ENCODE measurements at regions of chr2 and their contacts with region 1.

Region 1: DNA sequence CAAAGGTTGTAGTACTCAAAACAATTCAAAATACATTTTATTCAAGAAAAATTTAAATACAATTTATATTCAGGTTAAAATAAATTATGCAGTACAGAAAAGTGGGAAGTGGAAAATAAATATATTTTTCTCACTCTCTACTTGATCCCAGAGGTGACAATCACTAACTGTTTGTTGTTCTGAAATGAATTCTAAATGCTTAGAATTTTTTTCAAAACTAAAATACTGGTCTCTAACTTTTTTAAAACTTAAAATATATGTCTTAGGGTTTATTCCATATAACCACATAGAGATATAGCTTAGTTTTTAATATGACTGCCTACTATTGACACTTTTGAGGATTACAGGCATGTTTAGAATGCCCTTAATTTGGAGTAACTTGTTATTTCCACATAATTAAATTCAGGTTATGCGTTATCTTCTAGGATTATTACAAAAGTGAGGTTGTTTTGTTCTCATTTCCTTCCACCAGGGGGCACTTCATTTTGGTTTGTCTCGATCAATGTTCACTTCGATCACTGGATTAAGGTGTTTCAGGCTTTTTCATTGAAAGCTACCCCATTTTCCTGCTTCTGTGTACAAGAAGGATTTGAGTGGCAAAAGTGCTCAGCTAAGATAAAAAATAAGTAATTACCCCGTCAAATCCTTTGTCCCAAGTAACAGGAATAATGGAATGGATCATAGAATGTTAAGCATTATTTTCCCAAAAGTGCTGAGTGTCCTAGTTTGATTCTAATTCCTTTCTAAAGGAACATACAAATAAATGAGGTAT is 27.1 kb upstream of the TFPI start:
- DNase-seq: peak; percentile 76
- ATAC-seq: peak; percentile 68
- H3K4me3 ChIP-seq: peak overlapping the region in 1 of 2 experiments; percentile 16; a peak in 3 of 4 replicates
- H3K27ac ChIP-seq: no peak overlapping the region
- H3K4me1 ChIP-seq: peaks cover 0 to 11% of the 10 kb centered on the region in 2 experiments; a peak in 2 of 4 replicates
- H3K27me3 ChIP-seq: no peaks in the 10 kb centered on the region
- CTCF ChIP-seq: peak; percentile 54 to 81 (median 76); a peak in 5 of 6 replicates
- POLR2A ChIP-seq: no peak
- RAD21 ChIP-seq: peak; percentile 68

Region 2: DNA sequence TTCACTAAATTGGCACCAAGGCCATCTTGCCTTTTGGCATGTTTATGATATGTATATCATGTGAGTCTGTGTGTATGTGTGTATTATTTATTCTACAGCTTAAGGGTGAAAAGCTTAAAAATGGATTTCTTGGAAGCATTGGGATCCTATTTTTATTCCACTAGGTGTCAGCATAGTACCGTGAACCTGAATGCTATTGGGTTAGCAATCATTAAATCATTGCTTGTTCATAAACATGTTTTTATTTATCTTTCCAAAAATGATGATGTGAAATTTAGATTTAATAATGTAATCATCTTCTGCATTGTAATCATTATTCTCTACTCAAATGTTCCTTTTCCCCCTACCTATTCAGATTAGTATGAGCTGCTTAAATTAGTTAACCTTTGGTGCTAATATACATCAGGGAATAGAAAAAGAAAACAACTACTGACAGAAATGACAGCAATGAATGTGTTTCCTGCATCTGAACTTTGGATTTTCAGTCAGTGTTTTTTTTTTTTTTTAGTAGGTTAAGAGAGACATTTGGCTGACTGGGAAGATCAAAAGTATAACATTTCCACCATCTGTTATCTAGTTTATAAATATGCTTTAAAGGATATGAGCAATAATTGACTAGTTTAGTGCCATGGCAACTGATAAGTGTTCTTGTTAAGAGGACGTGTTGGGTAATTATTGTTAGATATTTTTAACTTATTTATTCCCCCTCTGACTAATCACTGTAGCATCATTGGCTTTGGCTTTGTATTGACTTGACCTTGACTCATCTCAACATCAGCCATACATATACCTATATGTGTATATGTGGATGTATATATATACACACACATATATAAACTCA is 718.2 kb before region 1 on chr2:
- CTCF ChIA-PET with region 1: interaction called, 8 read pairs
- POLR2A ChIA-PET with region 1: no interaction called
- RAD21 ChIA-PET with region 1: interaction called in 1 of 2 experiments, 3 read pairs
- intact Hi-C with region 1: loop called (anchors 2 kb)
- DNase-seq: peak; percentile 32
- ATAC-seq: peak; percentile 78
- H3K4me3 ChIP-seq: no peak overlapping the region
- H3K27ac ChIP-seq: no peak overlapping the region
- H3K4me1 ChIP-seq: no peaks in the 10 kb centered on the region
- H3K27me3 ChIP-seq: no peaks in the 10 kb centered on the region
- CTCF ChIP-seq: peak; percentile 54 to 83 (median 61)
- POLR2A ChIP-seq: no peak
- RAD21 ChIP-seq: peak; percentile 87

Region 3: DNA sequence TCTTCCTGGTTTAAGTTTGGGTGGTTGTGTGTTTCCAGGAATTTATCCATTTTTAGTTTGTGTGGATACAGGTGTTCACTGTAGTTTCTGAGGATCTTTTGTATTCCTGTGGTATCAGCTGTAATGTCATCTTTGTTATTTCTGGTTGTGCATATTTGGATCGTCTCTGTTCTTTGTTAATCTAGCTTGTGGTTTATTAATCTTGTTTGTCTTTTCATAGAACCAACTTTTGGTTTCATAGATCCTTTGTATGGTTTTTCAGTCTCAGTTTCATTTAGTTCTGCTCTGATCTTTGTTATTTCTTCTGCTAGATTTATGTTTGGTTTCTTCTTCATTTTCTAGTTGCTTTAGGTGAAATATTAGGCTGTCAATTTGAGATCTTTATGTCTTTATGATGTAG is 530.0 kb before region 1 on chr2:
- CTCF ChIA-PET with region 1: no interaction called
- POLR2A ChIA-PET with region 1: no interaction called
- RAD21 ChIA-PET with region 1: no interaction called
- intact Hi-C with region 1: no loop called
- DNase-seq: no peak
- ATAC-seq: no peak
- H3K4me3 ChIP-seq: no peak overlapping the region
- H3K27ac ChIP-seq: no peak overlapping the region
- H3K4me1 ChIP-seq: no peaks in the 10 kb centered on the region
- H3K27me3 ChIP-seq: no peaks in the 10 kb centered on the region
- CTCF ChIP-seq: no peak
- POLR2A ChIP-seq: no peak
- RAD21 ChIP-seq: no peak

Region 4: DNA sequence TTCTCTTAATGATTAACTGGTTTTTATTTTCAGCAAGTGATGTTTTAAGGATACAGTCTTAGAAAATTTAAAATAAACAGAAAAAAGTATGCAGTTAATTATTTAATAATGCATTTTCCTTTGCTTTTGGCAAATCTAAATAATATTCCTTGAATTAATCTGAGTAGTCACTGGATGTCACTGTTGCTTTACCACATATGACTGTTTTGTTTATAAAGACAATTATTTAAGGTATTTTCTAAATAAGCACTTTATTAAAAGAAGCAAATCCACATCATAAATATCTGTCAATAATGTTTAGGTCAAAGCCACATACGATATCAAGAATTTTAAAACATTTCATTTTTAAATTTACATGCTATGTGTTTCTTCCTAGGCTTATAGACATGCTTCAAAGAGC is 13.5 kb after region 1 on chr2:
- CTCF ChIA-PET with region 1: interaction called, 25 read pairs
- POLR2A ChIA-PET with region 1: no interaction called
- RAD21 ChIA-PET with region 1: no interaction called
- intact Hi-C with region 1: no loop called
- DNase-seq: no peak
- ATAC-seq: no peak
- H3K4me3 ChIP-seq: no peak overlapping the region
- H3K27ac ChIP-seq: no peak overlapping the region
- H3K4me1 ChIP-seq: no peaks in the 10 kb centered on the region
- H3K27me3 ChIP-seq: no peaks in the 10 kb centered on the region
- CTCF ChIP-seq: peak in 1 of 3 experiments; percentile 20; a peak in 2 of 6 replicates
- POLR2A ChIP-seq: no peak
- RAD21 ChIP-seq: peak; percentile 58

Region 5: DNA sequence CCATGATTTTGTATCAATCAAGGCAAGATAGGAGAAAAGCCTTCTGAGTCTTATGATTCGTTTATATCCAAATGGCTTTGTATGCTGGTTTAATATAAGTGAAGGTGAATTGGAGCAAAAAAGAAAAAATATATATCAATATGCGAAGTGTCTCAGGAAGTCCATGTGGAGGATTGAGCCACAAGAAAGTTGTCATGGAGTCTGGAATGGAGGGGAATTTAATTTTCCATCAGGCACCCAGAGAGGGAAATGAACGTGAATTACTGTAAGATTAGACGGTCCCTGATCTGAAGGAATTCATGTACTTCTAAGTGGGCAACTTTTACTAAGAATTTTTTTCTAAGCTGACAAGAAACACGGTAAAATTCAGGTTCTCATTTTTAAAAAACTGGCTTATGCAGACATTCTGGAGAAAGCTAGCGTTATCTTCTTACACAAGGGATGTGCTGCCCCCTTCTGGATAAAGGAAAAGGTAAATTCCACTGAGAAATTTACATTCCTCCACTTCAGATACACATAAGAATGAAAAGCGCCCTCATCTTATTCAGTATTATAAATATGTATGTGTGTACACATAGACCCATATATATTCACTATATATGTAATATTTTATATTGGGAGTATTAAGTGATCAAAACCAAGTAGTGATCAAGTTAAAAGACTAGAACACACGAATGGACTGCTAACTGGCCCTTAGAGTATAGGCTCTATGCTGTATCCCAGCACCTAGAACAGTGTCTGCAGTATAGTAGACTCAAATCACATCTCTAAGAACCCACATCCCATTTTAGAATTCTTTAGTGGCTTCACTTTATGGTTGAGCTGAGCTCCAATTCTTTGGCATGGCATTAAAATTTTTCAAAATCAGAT is 261.9 kb after region 1 on chr2:
- CTCF ChIA-PET with region 1: interaction called, 38 read pairs
- POLR2A ChIA-PET with region 1: no interaction called
- RAD21 ChIA-PET with region 1: no interaction called
- intact Hi-C with region 1: loop called (anchors 1 kb)
- DNase-seq: peak; percentile 53
- ATAC-seq: peak; percentile 81
- H3K4me3 ChIP-seq: no peak overlapping the region
- H3K27ac ChIP-seq: no peak overlapping the region
- H3K4me1 ChIP-seq: no peaks in the 10 kb centered on the region
- H3K27me3 ChIP-seq: no peaks in the 10 kb centered on the region
- CTCF ChIP-seq: peak; percentile 54 to 78 (median 68)
- POLR2A ChIP-seq: no peak
- RAD21 ChIP-seq: peak; percentile 87

Region 6: DNA sequence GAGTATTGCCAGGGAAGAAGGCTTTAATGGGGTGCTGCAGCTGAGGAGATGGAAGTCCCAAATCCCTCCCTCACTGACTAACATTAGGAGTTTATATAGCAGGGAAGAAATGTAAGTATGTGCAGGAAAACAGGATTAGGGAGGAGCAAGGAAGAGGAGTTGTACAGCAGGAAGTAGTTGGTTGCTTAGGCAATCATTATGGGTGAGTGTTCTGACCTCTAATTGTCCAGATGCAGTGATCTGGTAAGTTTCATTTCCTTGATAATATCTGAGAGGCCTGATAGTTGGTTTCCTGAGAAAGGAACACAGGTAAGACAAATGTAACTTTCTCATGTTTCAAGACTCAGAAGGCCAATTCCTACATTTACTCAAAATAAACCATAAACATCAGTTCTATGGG is 378.5 kb after region 1 on chr2:
- CTCF ChIA-PET with region 1: no interaction called
- POLR2A ChIA-PET with region 1: no interaction called
- RAD21 ChIA-PET with region 1: no interaction called
- intact Hi-C with region 1: no loop called
- DNase-seq: no peak
- ATAC-seq: no peak
- H3K4me3 ChIP-seq: no peak overlapping the region
- H3K27ac ChIP-seq: no peak overlapping the region
- H3K4me1 ChIP-seq: no peaks in the 10 kb centered on the region
- H3K27me3 ChIP-seq: no peaks in the 10 kb centered on the region
- CTCF ChIP-seq: no peak
- POLR2A ChIP-seq: no peak
- RAD21 ChIP-seq: no peak

Region 7: DNA sequence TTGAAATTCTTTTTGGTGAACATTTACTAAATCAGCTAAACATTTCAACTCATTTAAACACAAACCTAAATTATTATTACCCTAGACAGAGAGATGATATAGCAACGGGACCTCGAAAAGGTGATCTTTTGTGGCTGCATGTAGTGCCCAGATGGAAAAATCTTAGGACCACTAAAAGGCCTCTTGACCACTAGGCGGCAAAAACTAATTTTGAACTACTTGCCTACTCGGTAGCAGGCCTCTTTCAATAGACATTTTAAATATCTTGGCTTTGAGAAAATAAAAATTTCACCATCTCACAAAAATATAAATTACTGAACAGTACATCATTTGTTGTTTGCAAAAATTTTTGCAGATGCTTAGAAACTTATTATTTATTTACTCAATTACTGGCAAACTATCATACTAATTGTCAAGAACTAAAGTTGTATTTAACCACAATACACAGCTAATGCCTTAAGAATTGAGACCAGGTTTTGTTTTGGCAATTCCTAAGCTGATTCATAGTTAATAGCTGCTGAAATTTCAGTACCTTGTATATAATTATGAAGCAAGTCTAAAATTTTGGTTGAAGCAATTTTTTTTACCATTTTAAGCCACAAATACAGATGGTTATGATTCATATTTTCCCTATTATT is 1402.2 kb after region 1 on chr2:
- CTCF ChIA-PET with region 1: interaction called, 4 read pairs
- POLR2A ChIA-PET with region 1: no interaction called
- RAD21 ChIA-PET with region 1: no interaction called
- intact Hi-C with region 1: loop called (anchors 10 kb)
- DNase-seq: peak; percentile 34
- ATAC-seq: peak; percentile 63
- H3K4me3 ChIP-seq: no peak overlapping the region
- H3K27ac ChIP-seq: no peak overlapping the region
- H3K4me1 ChIP-seq: peaks cover 0 to 7% of the 10 kb centered on the region in 2 experiments; a peak in 1 of 4 replicates
- H3K27me3 ChIP-seq: no peaks in the 10 kb centered on the region
- CTCF ChIP-seq: peak; percentile 10 to 59 (median 44); a peak in 3 of 6 replicates
- POLR2A ChIP-seq: no peak
- RAD21 ChIP-seq: 0 out of 2 replicates have a peak, but pooled peaks have one; percentile 23